Natural killer cell (primary cell): ENCODE measurements at regions of chr1 and their contacts with region 1.

Region 1: DNA sequence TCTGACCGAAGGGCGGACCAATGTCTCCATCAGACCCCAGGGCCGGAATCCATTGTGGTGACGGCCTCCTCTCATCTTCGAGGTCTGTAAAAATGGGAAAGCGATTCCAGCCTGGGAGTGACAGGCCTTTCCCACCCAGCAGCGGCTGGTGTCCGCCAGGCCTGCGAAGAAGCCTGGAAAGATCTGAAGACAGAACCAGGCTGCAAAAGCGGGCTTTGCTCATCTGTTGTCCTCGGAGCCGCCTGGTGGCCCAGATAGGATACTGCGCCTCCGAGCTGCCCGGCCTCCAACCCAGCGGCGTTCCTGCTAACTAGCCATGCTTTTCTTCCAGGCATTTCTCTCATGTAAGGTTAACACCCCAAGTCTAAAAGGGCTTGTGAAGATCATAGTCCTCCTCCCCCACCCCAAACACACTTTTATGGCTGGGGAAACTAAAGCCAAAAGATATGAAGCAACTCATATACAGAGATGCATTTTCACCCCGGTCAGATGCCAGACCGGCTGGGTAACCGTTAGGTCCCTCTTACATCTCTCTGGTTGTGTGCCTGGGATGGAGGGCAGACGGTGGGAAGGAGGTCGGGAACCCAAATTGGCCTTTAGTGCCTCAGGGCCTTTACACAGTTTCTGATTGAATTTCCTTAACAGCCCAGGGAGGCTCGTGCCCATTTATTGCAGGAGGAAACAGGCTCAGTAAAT is 1.9 kb upstream of the DHRS3 start:
- DNase-seq: peak; percentile 76 to 89
- ATAC-seq: peak; percentile 54 to 75 (median 59)
- H3K4me3 ChIP-seq: peak overlapping the region; percentile 58
- H3K4me3 Mint-ChIP-seq: peak overlapping the region; percentile 100
- H3K27ac ChIP-seq: no peak overlapping the region
- H3K27ac Mint-ChIP-seq: peak overlapping the region; percentile 96 to 97
- H3K4me1 ChIP-seq: peaks cover 58% of the 10 kb centered on the region
- H3K4me1 Mint-ChIP-seq: peaks cover 46 to 58% of the 10 kb centered on the region in 2 donors
- H3K27me3 ChIP-seq: no peaks in the 10 kb centered on the region
- H3K27me3 Mint-ChIP-seq: no peaks in the 10 kb centered on the region
- CTCF ChIP-seq: peak; percentile 95

Region 2: DNA sequence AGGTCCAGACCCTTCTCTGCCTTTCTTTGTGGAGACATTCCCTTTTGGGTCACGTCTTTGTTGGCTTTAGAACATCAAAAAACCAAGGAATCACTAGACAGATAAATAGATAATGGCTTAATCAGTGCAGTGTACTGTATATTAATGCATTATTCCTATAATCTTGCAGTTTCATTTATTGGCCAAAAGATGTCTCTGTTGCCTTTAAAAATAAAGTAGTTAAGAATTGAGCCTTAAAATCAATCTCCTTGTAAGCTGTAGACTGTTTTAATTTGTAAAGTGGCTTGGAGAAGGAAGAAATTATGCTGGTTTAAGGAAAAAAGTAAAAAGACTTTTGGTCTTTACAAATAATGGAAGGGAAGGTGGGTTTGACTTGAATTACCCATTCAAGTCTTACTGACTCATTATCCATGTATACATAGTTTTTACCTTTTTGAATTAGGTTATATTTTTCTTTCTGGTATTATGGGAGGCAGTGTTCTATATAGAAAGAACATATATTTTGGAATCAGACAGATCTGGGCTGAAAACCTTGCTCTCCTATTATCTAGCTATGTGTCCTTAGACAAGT is 305.5 kb before region 1 on chr1:
- intact Hi-C with region 1: loop called (anchors 1 kb)
- DNase-seq: peak in 1 of 2 donors; percentile 48
- ATAC-seq: peak in 2 of 3 donors; percentile 53 to 64
- H3K4me3 ChIP-seq: no peak overlapping the region
- H3K4me3 Mint-ChIP-seq: no peak overlapping the region
- H3K27ac ChIP-seq: no peak overlapping the region
- H3K27ac Mint-ChIP-seq: no peak overlapping the region
- H3K4me1 ChIP-seq: no peaks in the 10 kb centered on the region
- H3K4me1 Mint-ChIP-seq: no peaks in the 10 kb centered on the region
- H3K27me3 ChIP-seq: no peaks in the 10 kb centered on the region
- H3K27me3 Mint-ChIP-seq: no peaks in the 10 kb centered on the region
- CTCF ChIP-seq: peak; percentile 62

Region 3: GRCh38 chr1:12407050-12407961 is 212.6 kb before region 1 on chr1:
- intact Hi-C with region 1: loop called (anchors 1 kb)
- DNase-seq: peak in 1 of 2 donors; percentile 63
- ATAC-seq: peak in 2 of 3 donors; percentile 73 to 74
- H3K4me3 ChIP-seq: no peak overlapping the region
- H3K4me3 Mint-ChIP-seq: no peak overlapping the region
- H3K27ac ChIP-seq: no peak overlapping the region
- H3K27ac Mint-ChIP-seq: peak overlapping the region in 1 of 2 donors; percentile 51
- H3K4me1 ChIP-seq: no peaks in the 10 kb centered on the region
- H3K4me1 Mint-ChIP-seq: peaks cover 13 to 16% of the 10 kb centered on the region in 2 donors
- H3K27me3 ChIP-seq: no peaks in the 10 kb centered on the region
- H3K27me3 Mint-ChIP-seq: no peaks in the 10 kb centered on the region
- CTCF ChIP-seq: peak; percentile 56

Region 4: DNA sequence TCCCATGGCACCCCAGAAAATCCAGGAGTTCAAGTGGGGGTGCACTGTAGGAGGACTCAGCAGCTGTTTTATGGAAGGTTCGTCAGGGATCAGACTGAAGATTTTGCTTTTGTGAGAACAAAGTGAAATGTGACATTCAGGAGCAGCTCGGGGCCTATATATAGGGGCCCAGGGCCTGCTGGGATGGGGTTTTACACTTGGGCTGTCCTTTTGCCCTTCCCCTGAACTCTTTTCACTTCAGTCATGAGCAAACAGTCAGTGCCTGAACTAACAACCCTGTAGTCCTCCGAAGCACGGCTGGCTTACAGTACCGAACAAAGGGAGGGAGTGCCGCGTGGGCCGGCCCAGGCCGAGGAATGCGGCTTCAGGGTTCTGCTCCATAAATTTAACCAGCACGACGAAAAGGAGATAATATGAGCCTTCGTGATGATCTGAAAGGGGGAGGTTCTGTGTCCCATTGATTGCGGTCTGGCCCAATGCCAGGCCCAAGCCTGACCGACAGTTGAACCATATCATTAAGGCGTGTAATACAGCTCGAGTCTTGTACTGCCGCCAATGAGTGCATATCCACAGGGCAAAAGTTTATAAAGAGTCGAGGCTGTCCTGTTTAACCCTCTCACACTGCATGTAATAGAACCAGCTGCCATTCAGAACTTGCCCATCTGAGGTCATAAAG is 141.9 kb before region 1 on chr1:
- intact Hi-C with region 1: loop called (anchors 2 kb)
- DNase-seq: peak in 1 of 2 donors; percentile 42
- ATAC-seq: peak in 2 of 3 donors; percentile 3 to 28
- H3K4me3 ChIP-seq: no peak overlapping the region
- H3K4me3 Mint-ChIP-seq: peak overlapping the region; percentile 75
- H3K27ac ChIP-seq: peak overlapping the region; percentile 41
- H3K27ac Mint-ChIP-seq: peak overlapping the region; percentile 96 to 98
- H3K4me1 ChIP-seq: peaks cover 72% of the 10 kb centered on the region
- H3K4me1 Mint-ChIP-seq: peaks cover 85 to 86% of the 10 kb centered on the region in 2 donors
- H3K27me3 ChIP-seq: no peaks in the 10 kb centered on the region
- H3K27me3 Mint-ChIP-seq: no peaks in the 10 kb centered on the region
- CTCF ChIP-seq: no peak

Region 5: GRCh38 chr1:12604114-12604874 is 15.6 kb before region 1 on chr1:
- intact Hi-C with region 1: loop called (anchors 1 kb)
- DNase-seq: peak; percentile 64 to 83
- ATAC-seq: peak; percentile 88 to 95 (median 94)
- H3K4me3 ChIP-seq: no peak overlapping the region
- H3K4me3 Mint-ChIP-seq: peak overlapping the region; percentile 82
- H3K27ac ChIP-seq: peak overlapping the region; percentile 60
- H3K27ac Mint-ChIP-seq: peak overlapping the region; percentile 90 to 95
- H3K4me1 ChIP-seq: peaks cover 52% of the 10 kb centered on the region
- H3K4me1 Mint-ChIP-seq: peaks cover 69 to 82% of the 10 kb centered on the region in 2 donors
- H3K27me3 ChIP-seq: no peaks in the 10 kb centered on the region
- H3K27me3 Mint-ChIP-seq: no peaks in the 10 kb centered on the region
- CTCF ChIP-seq: no peak

Region 6: DNA sequence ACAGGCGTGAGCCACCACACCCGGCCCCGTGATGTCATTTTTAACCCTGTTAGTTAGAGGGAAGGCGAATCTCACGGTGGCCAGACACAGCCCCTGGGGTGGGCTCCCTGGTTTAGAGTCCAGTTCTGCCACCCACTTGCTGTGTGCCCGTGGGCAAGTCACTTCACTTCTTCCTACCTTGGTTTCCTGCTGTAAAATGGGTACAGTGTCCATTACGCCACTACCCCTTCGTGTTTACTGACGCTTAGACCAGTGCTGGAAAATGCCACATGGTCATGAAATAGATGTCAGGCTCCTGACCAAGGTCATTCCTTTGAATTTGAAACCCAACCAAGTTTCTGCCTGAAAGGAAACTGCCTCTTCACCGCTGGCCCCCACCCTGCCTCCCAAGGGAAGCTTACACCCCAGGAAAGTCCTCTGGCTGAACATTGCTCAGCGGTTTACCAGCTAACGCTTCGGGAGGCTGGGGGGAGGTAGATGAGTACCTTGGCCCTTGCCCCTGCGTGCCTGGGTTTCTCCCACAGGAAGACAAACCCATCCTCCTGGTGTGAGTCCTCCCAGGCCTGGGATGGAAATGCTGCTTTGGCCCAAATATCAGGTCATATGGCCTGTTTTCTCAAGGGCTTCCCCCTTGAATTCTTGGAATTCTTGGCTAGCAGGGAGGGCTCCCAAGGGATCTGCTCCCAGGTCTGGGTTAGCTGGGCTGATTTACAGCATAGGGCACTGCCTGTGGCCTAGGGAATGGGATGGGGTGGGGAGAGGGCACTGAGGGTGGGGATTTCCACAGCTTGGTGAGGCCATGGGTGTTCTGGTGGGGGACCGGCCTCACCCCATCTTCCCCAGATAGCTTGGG is 16.4 kb after region 1 on chr1:
- intact Hi-C with region 1: no loop called
- DNase-seq: no peak
- ATAC-seq: no peak
- H3K4me3 ChIP-seq: no peak overlapping the region
- H3K4me3 Mint-ChIP-seq: no peak overlapping the region
- H3K27ac ChIP-seq: no peak overlapping the region
- H3K27ac Mint-ChIP-seq: no peak overlapping the region
- H3K4me1 ChIP-seq: peaks cover 14% of the 10 kb centered on the region
- H3K4me1 Mint-ChIP-seq: peaks cover 18 to 23% of the 10 kb centered on the region in 2 donors
- H3K27me3 ChIP-seq: no peaks in the 10 kb centered on the region
- H3K27me3 Mint-ChIP-seq: peaks cover 0 to 3% of the 10 kb centered on the region in 2 donors
- CTCF ChIP-seq: no peak